Natural killer cell (primary cell): ENCODE measurements at regions of chr3 and their contacts with region 1.

Region 1: DNA sequence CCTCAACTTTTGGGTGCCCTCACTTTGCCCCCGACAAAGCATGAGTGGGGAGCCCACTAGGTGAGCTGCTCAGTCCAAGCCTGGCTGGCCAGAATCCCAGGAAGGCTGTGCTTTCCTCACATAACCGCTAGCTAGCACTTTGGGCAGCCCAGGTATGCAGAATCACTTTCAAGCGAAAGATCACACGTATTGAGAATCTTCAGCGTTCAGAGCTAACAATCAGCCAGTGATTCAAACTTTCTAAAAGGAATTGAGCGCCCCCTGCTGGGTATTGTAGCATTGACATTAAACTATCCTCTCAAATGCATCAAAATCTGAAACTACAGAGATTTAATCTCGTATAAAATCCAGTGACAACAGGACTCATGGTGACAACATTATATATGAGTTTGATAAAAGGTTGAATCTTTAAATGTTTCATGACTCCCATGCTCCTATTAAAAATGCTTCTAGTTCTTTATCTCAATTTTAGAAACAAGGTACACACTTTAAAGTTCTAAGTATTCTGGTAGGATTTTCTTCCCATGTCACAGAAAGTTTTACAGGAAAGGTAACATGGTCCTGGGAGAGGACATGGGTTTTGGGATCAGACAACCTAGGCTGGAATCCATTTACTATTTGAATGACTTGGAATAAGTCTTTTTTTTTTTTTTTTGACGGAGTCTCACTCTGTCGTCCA is 11.8 kb downstream of the ANAPC13 start:
- DNase-seq: peak; percentile 63 to 86
- ATAC-seq: peak; percentile 76 to 82 (median 77)
- H3K4me3 ChIP-seq: no peak overlapping the region
- H3K4me3 Mint-ChIP-seq: no peak overlapping the region
- H3K27ac ChIP-seq: no peak overlapping the region
- H3K27ac Mint-ChIP-seq: no peak overlapping the region
- H3K4me1 ChIP-seq: no peaks in the 10 kb centered on the region
- H3K4me1 Mint-ChIP-seq: no peaks in the 10 kb centered on the region
- H3K27me3 ChIP-seq: no peaks in the 10 kb centered on the region
- H3K27me3 Mint-ChIP-seq: no peaks in the 10 kb centered on the region
- CTCF ChIP-seq: peak; percentile 80

Region 2: GRCh38 chr3:133927540-133928066 is 546.4 kb before region 1 on chr3:
- intact Hi-C with region 1: loop called (anchors 5 kb)
- DNase-seq: peak; percentile 71 to 89
- ATAC-seq: peak; percentile 92 to 99 (median 97)
- H3K4me3 ChIP-seq: peak overlapping the region; percentile 41
- H3K4me3 Mint-ChIP-seq: peak overlapping the region; percentile 81
- H3K27ac ChIP-seq: no peak overlapping the region
- H3K27ac Mint-ChIP-seq: peak overlapping the region in 1 of 2 donors; percentile 52
- H3K4me1 ChIP-seq: peaks cover 10% of the 10 kb centered on the region
- H3K4me1 Mint-ChIP-seq: peaks cover 5 to 17% of the 10 kb centered on the region in 2 donors
- H3K27me3 ChIP-seq: no peaks in the 10 kb centered on the region
- H3K27me3 Mint-ChIP-seq: peaks cover 18 to 19% of the 10 kb centered on the region in 2 donors
- CTCF ChIP-seq: peak; percentile 66

Region 3: DNA sequence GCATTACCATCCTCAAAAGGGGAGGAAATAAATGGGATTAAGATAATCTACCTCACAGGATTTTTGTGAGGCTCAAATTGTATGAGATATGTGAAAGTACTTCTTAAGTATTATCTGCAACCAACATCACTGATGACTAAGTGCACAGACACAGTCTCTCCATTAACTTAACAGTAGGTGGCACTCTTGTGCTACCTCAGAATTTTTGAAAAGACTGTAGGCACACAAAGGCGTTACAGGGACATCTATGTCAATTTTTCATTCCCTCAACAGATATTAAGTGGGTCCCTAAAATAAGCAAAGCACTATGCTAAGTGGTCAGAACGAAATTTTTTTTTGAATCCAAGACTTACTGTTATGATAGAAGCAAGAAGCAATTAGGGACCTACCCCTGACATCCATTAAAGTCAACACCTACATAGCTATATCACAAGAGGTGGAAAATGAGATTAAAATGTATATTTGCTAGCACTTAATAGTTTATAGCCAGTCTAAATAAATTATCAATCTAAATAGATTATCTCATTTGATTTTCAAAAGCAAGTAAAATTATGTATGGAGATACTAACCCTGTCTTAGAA is 276.2 kb before region 1 on chr3:
- intact Hi-C with region 1: loop called (anchors 1 kb)
- DNase-seq: peak in 1 of 2 donors; percentile 67
- ATAC-seq: peak; percentile 71 to 85 (median 84)
- H3K4me3 ChIP-seq: no peak overlapping the region
- H3K4me3 Mint-ChIP-seq: no peak overlapping the region
- H3K27ac ChIP-seq: no peak overlapping the region
- H3K27ac Mint-ChIP-seq: no peak overlapping the region
- H3K4me1 ChIP-seq: no peaks in the 10 kb centered on the region
- H3K4me1 Mint-ChIP-seq: no peaks in the 10 kb centered on the region
- H3K27me3 ChIP-seq: no peaks in the 10 kb centered on the region
- H3K27me3 Mint-ChIP-seq: no peaks in the 10 kb centered on the region
- CTCF ChIP-seq: peak; percentile 72

Region 4: DNA sequence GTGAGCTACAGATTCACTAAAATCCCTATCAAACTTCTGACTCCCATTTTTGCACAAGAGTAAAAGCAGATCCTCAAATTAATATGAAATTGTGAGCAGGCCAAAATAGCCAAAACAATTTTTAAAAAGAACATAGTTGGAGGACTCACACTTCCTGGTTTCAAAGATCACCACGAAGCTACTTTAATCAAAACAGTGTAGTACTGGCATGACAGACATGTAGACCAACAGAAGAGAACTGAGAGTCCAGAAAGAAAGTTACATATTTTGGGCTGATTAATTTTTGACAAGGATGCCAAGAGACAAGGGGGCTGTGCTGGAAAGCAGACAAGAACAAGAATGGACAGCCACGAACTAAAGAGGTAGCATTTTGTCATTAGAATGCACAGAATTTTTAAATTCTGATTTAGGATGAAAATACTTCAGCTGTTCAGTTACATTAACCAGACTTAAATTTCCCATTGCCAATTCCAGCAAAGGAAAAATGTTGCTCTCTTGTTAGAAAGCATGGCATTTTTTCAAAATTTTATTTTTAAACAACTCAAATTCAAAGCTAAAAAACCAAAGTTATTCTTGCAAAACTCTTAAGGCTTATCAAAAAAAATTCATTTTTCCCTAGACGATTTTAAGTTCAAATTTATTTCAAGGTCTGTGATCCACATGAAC is 237.4 kb before region 1 on chr3:
- intact Hi-C with region 1: no loop called
- DNase-seq: no peak
- ATAC-seq: no peak
- H3K4me3 ChIP-seq: no peak overlapping the region
- H3K4me3 Mint-ChIP-seq: no peak overlapping the region
- H3K27ac ChIP-seq: no peak overlapping the region
- H3K27ac Mint-ChIP-seq: peak overlapping the region in 1 of 2 donors; percentile 20
- H3K4me1 ChIP-seq: peaks cover 3% of the 10 kb centered on the region
- H3K4me1 Mint-ChIP-seq: peaks cover 69% of the 10 kb centered on the region in 2 donors
- H3K27me3 ChIP-seq: no peaks in the 10 kb centered on the region
- H3K27me3 Mint-ChIP-seq: no peaks in the 10 kb centered on the region
- CTCF ChIP-seq: no peak

Region 5: GRCh38 chr3:134308350-134308891 is 165.6 kb before region 1 on chr3:
- intact Hi-C with region 1: loop called (anchors 1 kb)
- DNase-seq: peak; percentile 63 to 85
- ATAC-seq: peak; percentile 77 to 87 (median 85)
- H3K4me3 ChIP-seq: no peak overlapping the region
- H3K4me3 Mint-ChIP-seq: peak overlapping the region; percentile 45
- H3K27ac ChIP-seq: no peak overlapping the region
- H3K27ac Mint-ChIP-seq: no peak overlapping the region
- H3K4me1 ChIP-seq: peaks cover 4% of the 10 kb centered on the region
- H3K4me1 Mint-ChIP-seq: peaks cover 8 to 12% of the 10 kb centered on the region in 2 donors
- H3K27me3 ChIP-seq: peaks cover 17% of the 10 kb centered on the region
- H3K27me3 Mint-ChIP-seq: peaks cover 36 to 58% of the 10 kb centered on the region in 2 donors
- CTCF ChIP-seq: peak; percentile 97